ENCODE measurements at regions of chr7 and their contacts with region 1.

Region 1: GRCh38 chr7:101814991-101815834 is 2.2 kb upstream of the CUX1 start:
- DNase-seq: peak; percentile 64 to 82 (median 82)
- H3K4me3 ChIP-seq: peak overlapping the region; percentile 53 to 88 (median 77)
- H3K27ac ChIP-seq: peak overlapping the region in 1 of 2 experiments; percentile 54
- H3K4me1 ChIP-seq: peaks cover 11 to 40% (median 31%) of the 10 kb centered on the region in 4 experiments
- H3K27me3 ChIP-seq: no peaks in the 10 kb centered on the region

Region 2: DNA sequence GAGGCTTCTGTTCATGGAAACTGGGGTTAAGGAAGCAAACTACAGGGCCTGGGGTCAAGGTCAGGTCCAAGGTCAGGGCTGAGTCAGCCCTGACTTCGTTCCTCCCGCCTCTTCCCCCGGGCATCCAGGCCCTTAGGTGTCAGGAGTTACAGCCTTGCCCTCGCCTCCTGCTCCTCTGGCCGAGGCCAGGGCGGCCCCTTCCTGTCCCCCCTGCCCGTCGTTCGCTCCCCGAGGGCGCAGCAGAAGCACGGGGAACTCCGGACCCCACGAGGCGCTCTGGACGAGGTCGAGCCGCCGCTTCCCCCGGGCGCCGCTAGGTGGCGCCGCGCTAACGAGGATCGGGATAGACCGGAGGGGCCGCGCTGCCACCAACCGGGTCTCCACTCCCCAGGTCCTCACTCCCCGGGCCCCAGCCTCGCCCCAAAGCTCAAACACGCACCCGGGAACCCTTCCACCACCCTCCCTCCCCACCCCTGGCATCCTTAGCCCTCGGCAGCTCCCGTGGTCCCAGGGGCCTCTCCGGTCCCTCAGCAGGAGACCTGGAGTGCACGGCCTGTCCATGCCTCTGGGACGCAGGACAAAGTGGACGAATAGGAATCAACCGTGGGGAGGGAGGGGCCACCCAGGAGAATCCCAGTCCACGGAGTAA is 126.9 kb before region 1 on chr7:
- CTCF ChIA-PET with region 1: interaction called, 14 read pairs
- POLR2A ChIA-PET with region 1: no interaction called
- DNase-seq: peak; percentile 72 to 83 (median 79)
- H3K4me3 ChIP-seq: peak overlapping the region in 4 of 7 experiments; percentile 50 to 59 (median 56)
- H3K27ac ChIP-seq: no peak overlapping the region
- H3K4me1 ChIP-seq: peaks cover 0 to 26% (median 10%) of the 10 kb centered on the region in 4 experiments
- H3K27me3 ChIP-seq: no peaks in the 10 kb centered on the region

Region 3: DNA sequence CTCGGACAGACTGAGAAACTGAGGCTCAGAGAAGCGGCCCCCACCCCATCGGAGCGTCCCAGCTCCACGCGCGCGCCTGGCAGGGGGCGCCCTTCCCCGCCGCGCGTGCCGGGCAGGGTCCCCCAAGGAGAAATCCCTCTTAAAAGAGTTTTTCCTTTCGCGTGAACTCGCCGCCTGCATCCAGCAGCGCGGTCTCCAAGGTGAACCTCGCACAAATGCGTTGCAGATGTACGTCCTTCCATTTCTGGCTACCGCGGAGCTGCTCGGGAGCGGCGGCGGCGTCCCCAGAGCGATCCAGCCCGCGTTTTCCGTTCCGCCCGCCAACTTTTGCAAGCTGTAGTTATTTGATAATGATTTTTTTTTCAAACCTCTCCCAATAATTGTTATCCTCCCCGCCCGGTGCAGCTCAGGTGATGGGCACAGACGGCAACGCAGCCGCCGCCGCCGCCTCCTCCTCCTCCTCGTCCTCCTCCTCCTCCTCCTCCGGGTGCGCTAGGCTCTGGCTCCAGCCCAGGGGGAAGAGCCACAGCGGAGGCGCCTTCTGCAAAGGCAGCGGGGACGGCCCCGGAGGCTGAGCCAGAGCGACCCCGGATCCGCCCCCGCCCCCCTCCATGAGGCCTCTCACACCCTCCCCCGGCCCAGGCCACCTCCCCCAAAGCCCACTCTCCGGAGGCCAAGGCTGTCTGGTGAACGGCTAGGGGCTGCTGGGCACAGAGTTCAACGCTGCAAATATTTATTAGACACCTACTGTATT is 71.8 kb before region 1 on chr7:
- CTCF ChIA-PET with region 1: interaction called, 12 read pairs
- POLR2A ChIA-PET with region 1: interaction called, 7 read pairs
- DNase-seq: peak; percentile 84 to 92 (median 88)
- H3K4me3 ChIP-seq: peak overlapping the region; percentile 59 to 89 (median 75)
- H3K27ac ChIP-seq: peak overlapping the region; percentile 33 to 64
- H3K4me1 ChIP-seq: peaks cover 9 to 73% (median 67%) of the 10 kb centered on the region in 4 experiments
- H3K27me3 ChIP-seq: no peaks in the 10 kb centered on the region

Region 4: DNA sequence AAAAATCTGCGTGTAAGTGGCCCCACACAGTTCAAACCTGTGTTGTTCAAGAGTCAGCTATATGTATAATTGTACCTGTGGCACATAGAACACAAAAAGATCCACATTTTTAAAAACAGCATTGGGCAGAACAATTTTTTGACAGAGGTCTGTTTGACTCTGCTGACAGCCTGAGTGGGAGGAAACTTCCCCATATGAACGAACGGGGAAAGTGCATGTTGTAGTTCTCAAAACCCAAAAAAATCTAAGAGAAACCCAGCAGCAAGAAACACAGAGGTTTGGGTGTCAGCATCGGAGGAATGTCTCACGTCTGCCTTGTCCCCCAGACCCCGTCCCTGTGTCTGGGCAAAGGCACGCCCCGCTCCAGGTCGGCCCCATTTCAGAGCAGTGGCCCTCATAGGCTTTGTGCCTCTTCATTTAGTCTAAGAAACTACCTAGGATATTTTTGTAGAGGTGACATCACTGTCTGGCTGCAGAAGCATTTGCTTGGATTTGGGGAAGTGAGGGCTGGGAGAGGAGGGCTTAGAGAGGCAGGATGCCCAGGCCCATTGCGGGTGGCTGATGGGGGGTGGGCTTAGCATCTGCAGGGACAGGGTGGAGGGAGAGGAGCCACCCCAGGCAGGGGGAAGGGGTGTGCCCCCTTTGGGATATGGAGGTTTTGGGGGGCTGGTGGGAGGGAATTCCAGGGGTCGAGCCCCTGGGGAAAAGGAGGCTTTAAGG is 13.2 kb after region 1 on chr7:
- CTCF ChIA-PET with region 1: interaction called, 15 read pairs
- POLR2A ChIA-PET with region 1: no interaction called
- DNase-seq: peak in 1 of 3 donors; percentile 25
- H3K4me3 ChIP-seq: no peak overlapping the region
- H3K27ac ChIP-seq: no peak overlapping the region
- H3K4me1 ChIP-seq: peaks cover 0 to 16% (median 5%) of the 10 kb centered on the region in 4 experiments
- H3K27me3 ChIP-seq: no peaks in the 10 kb centered on the region

Region 5: DNA sequence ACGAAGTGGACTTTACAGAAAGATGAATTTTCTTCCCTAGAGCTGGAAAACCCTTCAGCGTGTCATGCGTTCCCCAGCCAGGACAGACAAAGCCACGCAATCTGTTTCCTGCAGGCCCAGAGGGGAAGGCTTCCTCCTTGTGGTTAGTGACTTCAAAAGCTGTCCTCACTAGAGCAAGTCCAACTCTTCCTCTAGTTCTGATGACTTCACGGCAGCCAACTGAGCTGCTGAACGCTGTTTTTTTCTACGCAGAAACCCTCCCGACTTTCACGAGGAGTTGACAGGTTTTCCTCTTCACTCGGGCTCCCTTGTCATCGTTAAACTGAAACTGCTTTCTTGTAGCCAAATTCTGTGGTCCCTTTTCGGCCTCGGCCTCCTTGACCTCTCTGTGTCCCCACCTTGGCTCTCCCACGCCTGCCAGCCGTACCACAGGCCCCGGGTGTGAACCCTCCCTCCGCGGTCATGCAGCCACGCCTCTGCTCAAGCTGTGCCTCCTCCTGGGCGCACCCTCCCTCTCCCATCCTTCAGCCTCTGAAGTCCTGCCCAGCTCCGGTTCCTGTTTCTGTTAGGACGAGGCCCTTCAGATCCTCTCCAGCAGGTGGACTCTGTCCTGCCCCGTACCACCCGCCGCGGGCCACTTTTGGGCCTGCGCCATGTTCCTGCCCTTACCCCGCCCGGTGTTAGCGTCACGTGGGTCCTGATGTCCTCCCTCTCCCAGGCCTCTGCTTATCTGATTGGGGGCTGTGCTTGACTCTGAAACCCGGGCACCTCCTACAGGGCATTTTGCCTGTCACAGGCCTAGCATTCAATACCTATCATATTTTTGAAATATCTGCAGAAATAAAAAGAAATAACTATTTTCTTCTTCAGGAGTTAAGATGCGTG is 41.5 kb after region 1 on chr7:
- CTCF ChIA-PET with region 1: interaction called, 17 read pairs
- POLR2A ChIA-PET with region 1: interaction called, 3 read pairs
- DNase-seq: peak; percentile 98 to 100 (median 99)
- H3K4me3 ChIP-seq: peak overlapping the region; percentile 13 to 78 (median 62)
- H3K27ac ChIP-seq: peak overlapping the region; percentile 86 to 93
- H3K4me1 ChIP-seq: peaks cover 23 to 74% (median 68%) of the 10 kb centered on the region in 4 experiments
- H3K27me3 ChIP-seq: no peaks in the 10 kb centered on the region

Measured in common myeloid progenitor, CD34-positive (primary cell).